ENCODE measurements at regions of chr9 and their contacts with region 1.

Region 1: GRCh38 chr9:94065535-94065961 is 18.7 kb upstream of the PTPDC1 start:
- DNase-seq: peak; percentile 85 to 92 (median 88)
- H3K4me3 ChIP-seq: no peak overlapping the region
- H3K27ac ChIP-seq: no peak overlapping the region
- H3K4me1 ChIP-seq: peaks cover 0 to 7% (median 2%) of the 10 kb centered on the region in 4 experiments
- H3K27me3 ChIP-seq: no peaks in the 10 kb centered on the region

Region 2: DNA sequence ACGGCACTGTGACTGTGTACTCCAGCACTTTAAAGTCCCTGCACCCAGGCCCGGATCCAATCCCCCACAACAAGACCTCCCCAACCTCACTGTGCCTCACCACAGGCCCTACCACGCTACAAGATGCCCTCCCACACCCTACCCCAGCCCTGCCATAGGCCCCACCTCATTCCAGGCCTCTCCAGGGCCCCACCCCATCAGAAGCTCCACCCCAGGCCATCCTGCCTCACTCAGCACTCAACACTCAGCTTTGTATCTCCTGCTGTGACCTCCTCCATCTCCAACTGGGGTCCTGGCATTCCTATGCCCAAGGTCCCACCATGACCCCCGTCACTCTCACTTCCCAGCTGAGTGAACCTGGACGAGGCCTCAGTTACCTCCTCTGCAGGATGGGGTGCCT is 149.2 kb before region 1 on chr9:
- CTCF ChIA-PET with region 1: no interaction called
- POLR2A ChIA-PET with region 1: no interaction called
- DNase-seq: no peak
- H3K4me3 ChIP-seq: no peak overlapping the region
- H3K27ac ChIP-seq: no peak overlapping the region
- H3K4me1 ChIP-seq: no peaks in the 10 kb centered on the region
- H3K27me3 ChIP-seq: peaks cover 0 to 7% (median 0%) of the 10 kb centered on the region in 5 experiments

Region 3: DNA sequence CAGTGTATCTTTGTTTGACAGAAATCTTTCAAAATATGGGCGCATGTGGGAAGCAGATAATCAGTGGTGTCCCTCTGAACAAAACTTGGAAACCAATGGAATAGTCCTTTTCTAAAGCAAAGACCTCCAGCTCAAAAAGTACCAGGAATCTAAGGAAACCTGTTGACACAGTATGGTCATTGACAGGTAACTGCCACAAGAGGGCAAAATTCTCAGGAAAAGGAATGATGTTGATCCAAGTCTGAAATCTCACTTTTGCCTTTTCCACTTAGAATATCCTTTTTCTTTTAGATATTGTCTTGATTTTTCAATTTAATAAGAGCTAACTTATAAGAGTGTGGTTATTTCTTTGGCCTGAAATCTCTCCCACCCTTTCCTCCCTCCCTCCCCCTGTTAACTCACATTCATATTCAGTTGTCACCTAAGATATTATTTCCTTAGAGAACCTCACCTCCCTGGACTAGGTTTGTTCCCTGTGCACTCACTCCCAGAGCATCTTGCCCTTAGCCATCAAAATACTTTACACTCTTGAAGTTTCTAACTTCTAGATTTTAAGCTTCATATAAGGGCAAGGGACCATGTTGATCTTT is 51.4 kb before region 1 on chr9:
- CTCF ChIA-PET with region 1: interaction called, 13 read pairs
- POLR2A ChIA-PET with region 1: no interaction called
- DNase-seq: peak; percentile 14 to 40 (median 19)
- H3K4me3 ChIP-seq: no peak overlapping the region
- H3K27ac ChIP-seq: no peak overlapping the region
- H3K4me1 ChIP-seq: peaks cover 0 to 7% (median 4%) of the 10 kb centered on the region in 4 experiments
- H3K27me3 ChIP-seq: no peaks in the 10 kb centered on the region

Region 4: DNA sequence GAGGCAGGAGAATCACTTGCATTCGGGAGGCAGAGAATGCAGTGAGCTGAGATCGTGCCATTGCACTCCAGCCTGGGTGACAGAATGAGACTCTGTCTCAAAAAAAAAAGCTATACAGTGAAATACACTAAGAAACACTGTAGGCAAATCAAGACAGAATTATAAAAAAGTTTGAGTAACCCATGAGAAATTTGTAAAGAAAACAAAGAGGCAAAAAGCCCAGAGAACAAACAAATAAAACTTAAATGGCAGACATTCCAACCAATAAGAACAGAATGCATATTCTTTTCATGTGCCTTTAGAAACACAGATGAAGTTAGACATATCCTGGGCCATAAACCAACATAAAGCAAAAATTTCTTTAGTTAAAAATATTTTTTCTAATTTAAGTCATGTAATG is 224.1 kb after region 1 on chr9:
- CTCF ChIA-PET with region 1: no interaction called
- POLR2A ChIA-PET with region 1: no interaction called
- DNase-seq: no peak
- H3K4me3 ChIP-seq: no peak overlapping the region
- H3K27ac ChIP-seq: no peak overlapping the region
- H3K4me1 ChIP-seq: no peaks in the 10 kb centered on the region
- H3K27me3 ChIP-seq: no peaks in the 10 kb centered on the region

Measured in common myeloid progenitor, CD34-positive (primary cell).